Breast epithelium (tissue), 4 donors: ENCODE measurements at regions of chr9 and their contacts with region 1.

Region 1: DNA sequence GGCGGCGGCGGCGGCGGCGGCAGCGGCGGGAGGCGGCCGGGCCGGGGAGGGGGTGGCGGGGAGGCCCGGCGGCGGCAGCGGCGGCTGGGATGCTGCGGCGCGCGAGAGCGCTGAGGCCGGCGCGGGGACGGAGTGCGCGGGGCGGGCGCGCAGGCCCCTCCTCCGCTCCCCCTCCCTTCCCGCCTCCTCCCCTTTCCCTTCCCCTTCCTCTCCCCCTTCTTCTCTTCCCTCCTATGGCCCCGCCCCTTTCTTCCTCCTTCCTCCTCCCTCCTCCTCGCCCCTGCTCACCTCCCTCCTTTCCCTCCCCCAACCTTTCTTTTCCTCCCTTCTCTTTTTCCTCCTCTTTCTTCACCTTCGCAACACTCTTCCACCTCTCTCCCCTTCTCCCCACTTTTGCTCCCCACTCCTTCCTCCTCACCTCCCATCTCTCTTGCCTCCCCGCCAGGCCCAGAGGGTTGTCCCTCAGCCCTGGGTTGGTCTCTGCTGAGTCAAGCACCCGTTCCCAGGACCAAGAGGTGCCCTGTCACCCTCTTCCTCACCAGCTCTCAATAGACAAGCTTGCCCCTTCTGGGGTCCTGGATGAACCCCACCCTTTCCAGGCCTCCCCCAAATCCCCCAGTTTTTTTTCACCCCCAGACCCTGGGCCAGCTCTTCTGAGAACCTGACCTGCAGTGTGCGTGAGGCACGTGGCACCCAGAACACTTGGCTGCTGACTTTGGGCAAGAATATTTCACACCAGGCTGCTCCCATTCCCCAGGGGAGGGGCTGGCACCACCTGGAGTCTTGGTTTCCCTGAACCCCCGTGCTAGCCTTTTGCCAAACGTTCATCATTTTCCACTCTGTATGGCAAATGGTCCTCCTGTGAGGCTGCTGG is at the start of gene SEMA4D:
- DNase-seq: peak in 1 of 2 donors; percentile 42
- H3K4me3 ChIP-seq: peak within 1 kb of the TSS; percentile 71 to 96 (median 88)
- H3K27ac ChIP-seq: peak within 1 kb of the TSS; percentile 52 to 80
- H3K4me1 ChIP-seq: peaks cover 6 to 8% of the 10 kb centered on the region in 2 donors
- H3K27me3 ChIP-seq: no peaks in the 10 kb centered on the region
- CTCF ChIP-seq: no peak
- POLR2A ChIP-seq: no peak
- total RNA-seq, gene SEMA4D: 9.9 to 24.6 (median 16.1) TPM

Region 2: GRCh38 chr9:89455356-89455824 is 42.8 kb before region 1 on chr9:
- intact Hi-C with region 1: loop called (anchors 1 kb)
- DNase-seq: no peak
- H3K4me3 ChIP-seq: no peak overlapping the region
- H3K27ac ChIP-seq: no peak overlapping the region
- H3K4me1 ChIP-seq: no peaks in the 10 kb centered on the region
- H3K27me3 ChIP-seq: no peaks in the 10 kb centered on the region
- CTCF ChIP-seq: no peak
- POLR2A ChIP-seq: no peak

Region 3: GRCh38 chr9:91089405-91090129 is 1591.4 kb after region 1 on chr9:
- intact Hi-C with region 1: loop called (anchors 5 kb)
- DNase-seq: no peak
- H3K4me3 ChIP-seq: no peak overlapping the region
- H3K27ac ChIP-seq: no peak overlapping the region
- H3K4me1 ChIP-seq: no peaks in the 10 kb centered on the region
- H3K27me3 ChIP-seq: no peaks in the 10 kb centered on the region
- CTCF ChIP-seq: no peak
- POLR2A ChIP-seq: no peak